Adrenal gland (tissue), 19 donors: ENCODE measurements at regions of chr19 and their contacts with region 1.

Region 1: DNA sequence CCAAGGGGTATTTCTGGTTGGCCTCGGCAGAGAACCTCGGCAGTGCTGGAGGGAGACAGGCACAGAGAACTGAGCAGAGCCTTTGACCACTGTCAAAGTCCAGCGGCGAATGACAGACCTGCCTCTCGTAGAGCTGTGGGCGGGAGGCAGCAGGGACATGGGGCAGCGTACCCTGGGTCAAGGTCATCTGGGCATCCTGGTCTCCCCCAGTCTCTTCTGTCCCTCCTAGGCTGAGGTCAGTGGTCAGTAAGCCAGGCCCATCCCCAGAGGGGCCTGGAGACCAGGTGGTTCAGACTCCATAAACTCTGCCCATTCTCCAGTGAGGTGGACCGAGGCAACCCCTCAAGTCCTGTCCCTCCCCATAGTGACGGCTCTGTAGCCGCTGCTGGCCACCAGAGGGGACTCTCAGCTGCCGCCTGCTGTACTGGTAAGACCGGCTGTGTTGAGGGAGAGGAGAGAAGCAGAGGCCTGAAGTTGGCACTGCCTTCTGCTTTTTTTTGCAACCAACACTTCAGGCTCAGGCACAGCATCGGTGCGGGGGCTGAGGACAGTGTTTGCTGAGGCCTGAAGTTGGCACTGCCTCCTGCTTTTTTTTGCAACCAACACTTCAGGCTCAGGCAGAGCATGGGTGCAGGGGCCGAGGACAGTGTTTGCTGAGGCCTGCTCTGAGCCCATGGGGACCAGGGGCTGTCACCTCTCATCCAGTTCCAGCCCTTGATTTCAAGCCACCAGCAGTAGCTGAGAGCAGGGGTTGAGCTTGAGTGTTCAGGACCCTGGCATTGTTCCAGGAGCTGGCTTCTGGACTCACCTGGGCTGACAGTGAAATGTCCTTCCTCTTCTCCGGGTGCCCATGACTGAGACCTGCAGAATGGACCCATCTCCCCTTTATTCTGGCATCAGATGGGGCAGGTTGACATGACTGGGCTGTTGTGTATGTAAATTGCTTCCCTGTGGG is at the start of gene PGLYRP2:
- DNase-seq: no peak
- H3K4me3 ChIP-seq: no peak within 1 kb of the TSS
- H3K27ac ChIP-seq: no peak within 1 kb of the TSS
- H3K4me1 ChIP-seq: no peaks in the 10 kb centered on the region
- H3K27me3 ChIP-seq: no peaks in the 10 kb centered on the region
- CTCF ChIP-seq: no peak
- POLR2A ChIP-seq: no peak
- total RNA-seq, gene PGLYRP2: not detected

Region 2: DNA sequence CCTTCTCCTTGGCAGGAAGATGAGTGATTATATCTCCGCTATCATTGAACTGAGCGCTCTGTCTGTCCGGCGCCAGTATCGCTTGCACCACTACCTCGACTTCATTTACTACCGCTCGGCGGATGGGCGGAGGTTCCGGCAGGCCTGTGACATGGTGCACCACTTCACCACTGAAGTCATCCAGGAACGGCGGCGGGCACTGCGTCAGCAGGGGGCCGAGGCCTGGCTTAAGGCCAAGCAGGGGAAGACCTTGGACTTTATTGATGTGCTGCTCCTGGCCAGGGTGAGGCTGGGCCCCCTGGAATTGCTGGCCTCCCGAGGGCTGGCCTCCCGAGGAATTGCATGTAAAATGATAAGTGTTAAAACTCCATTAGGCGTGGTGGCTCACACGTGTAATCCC is 60.8 kb after region 1 on chr19:
- intact Hi-C with region 1: loop called in 1 of 2 experiments (anchors 10 kb)
- DNase-seq: no peak
- H3K4me3 ChIP-seq: no peak overlapping the region
- H3K27ac ChIP-seq: no peak overlapping the region
- H3K4me1 ChIP-seq: no peaks in the 10 kb centered on the region
- H3K27me3 ChIP-seq: peaks cover 3% of the 10 kb centered on the region
- CTCF ChIP-seq: no peak
- POLR2A ChIP-seq: no peak